B cell (primary cell): ENCODE measurements at regions of chr13 and their contacts with region 1.

Region 1: GRCh38 chr13:43023289-43023951 is at the start of gene DNAJC15:
- DNase-seq: peak; percentile 92
- ATAC-seq: peak; percentile 90
- H3K4me3 ChIP-seq: peak within 1 kb of the TSS; percentile 67 to 89 (median 70)
- H3K4me3 Mint-ChIP-seq: peak within 1 kb of the TSS; percentile 96
- H3K27ac ChIP-seq: peak within 1 kb of the TSS; percentile 81 to 87
- H3K27ac Mint-ChIP-seq: peak within 1 kb of the TSS; percentile 97
- H3K4me1 ChIP-seq: peaks cover 25 to 26% of the 10 kb centered on the region in 2 donors
- H3K4me1 Mint-ChIP-seq: peaks cover 41% of the 10 kb centered on the region
- H3K27me3 ChIP-seq: no peaks in the 10 kb centered on the region
- H3K27me3 Mint-ChIP-seq: no peaks in the 10 kb centered on the region
- CTCF ChIP-seq: peak; percentile 25
- total RNA-seq, gene DNAJC15: 13.5 and 15.2 TPM in 2 replicates

Region 2: DNA sequence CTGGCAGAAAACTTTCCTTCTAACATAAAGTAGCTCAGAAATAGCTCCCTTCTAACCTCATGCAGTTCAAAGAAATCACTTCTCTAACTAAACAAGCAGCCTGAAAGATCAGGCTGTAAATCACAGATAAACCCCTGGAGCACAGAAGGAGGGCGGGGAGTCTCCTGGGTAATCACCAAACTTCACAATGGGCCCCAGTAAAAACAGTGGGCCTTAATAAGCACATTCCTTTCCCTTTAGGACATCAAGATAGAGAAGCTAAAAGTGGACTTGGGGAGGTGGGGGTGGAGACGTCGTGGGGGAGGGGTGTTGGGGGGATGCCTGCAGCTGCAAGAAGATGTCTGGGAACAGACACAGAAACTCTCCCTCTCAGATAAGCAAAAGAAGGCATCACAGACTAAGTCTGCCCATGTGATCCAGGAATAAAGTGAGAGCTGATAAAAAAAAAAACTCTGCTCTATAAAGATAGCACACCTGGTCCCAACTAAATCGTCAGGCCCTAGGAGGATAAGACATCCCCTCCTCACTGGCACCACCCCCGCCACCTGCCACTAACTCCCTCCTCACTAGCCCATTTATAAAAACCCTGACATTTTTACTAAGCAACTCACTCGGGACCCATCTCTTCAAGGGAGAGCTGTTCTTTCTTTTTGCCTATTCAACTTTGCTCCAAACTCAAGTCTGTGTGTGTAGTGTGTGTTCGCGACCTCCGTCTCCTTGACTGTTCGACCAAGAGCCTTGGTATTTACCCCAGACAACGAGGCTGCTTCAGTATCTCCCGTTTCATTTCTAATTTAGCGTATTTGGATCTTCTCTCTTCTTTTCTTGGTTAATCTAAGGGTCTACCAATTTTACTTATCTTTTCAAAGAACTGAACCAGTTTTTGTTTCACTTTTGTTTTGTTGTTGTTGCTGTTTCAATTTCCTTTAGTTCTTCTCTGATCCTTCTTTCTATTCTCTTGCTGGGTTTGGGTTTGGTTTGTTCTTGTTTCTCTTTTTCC is 31.7 kb after region 1 on chr13:
- CTCF ChIA-PET with region 1: interaction called, 6 read pairs
- POLR2A ChIA-PET with region 1: interaction called, 4 read pairs
- intact Hi-C with region 1: loop called (anchors 2 kb)
- DNase-seq: peak; percentile 68
- ATAC-seq: peak; percentile 56
- H3K4me3 ChIP-seq: peak overlapping the region; percentile 51 to 78 (median 69)
- H3K4me3 Mint-ChIP-seq: no peak overlapping the region
- H3K27ac ChIP-seq: peak overlapping the region; percentile 77 to 98
- H3K27ac Mint-ChIP-seq: no peak overlapping the region
- H3K4me1 ChIP-seq: peaks cover 42 to 50% of the 10 kb centered on the region in 2 donors
- H3K4me1 Mint-ChIP-seq: peaks cover 41% of the 10 kb centered on the region
- H3K27me3 ChIP-seq: no peaks in the 10 kb centered on the region
- H3K27me3 Mint-ChIP-seq: no peaks in the 10 kb centered on the region
- CTCF ChIP-seq: no peak

Region 3: GRCh38 chr13:43196750-43197370 is 173.4 kb after region 1 on chr13:
- CTCF ChIA-PET with region 1: no interaction called
- POLR2A ChIA-PET with region 1: no interaction called
- intact Hi-C with region 1: no loop called
- DNase-seq: no peak
- ATAC-seq: no peak
- H3K4me3 ChIP-seq: no peak overlapping the region
- H3K4me3 Mint-ChIP-seq: no peak overlapping the region
- H3K27ac ChIP-seq: no peak overlapping the region
- H3K27ac Mint-ChIP-seq: no peak overlapping the region
- H3K4me1 ChIP-seq: no peaks in the 10 kb centered on the region
- H3K4me1 Mint-ChIP-seq: no peaks in the 10 kb centered on the region
- H3K27me3 ChIP-seq: peaks cover 0 to 5% (median 0%) of the 10 kb centered on the region in 4 experiments
- H3K27me3 Mint-ChIP-seq: peaks cover 36% of the 10 kb centered on the region
- CTCF ChIP-seq: no peak